ENCODE measurements at regions of chr1 and their contacts with region 1.

Region 1: GRCh38 chr1:92485381-92486257 is 1.1 kb downstream of the GFI1 start:
- DNase-seq: peak; percentile 95
- ATAC-seq: peak; percentile 57
- H3K4me3 Mint-ChIP-seq: peak overlapping the region; percentile 98
- H3K27ac Mint-ChIP-seq: peak overlapping the region; percentile 98
- H3K4me1 Mint-ChIP-seq: peaks cover 28% of the 10 kb centered on the region
- H3K27me3 Mint-ChIP-seq: no peaks in the 10 kb centered on the region
- CTCF ChIP-seq: peak; percentile 72

Region 2: GRCh38 chr1:92310185-92310597 is 175.4 kb before region 1 on chr1:
- CTCF ChIA-PET with region 1: interaction called, 21 read pairs
- POLR2A ChIA-PET with region 1: interaction called, 57 read pairs
- intact Hi-C with region 1: loop called (anchors 5 kb)
- DNase-seq: no peak
- ATAC-seq: peak; percentile 68
- H3K4me3 Mint-ChIP-seq: no peak overlapping the region
- H3K27ac Mint-ChIP-seq: no peak overlapping the region
- H3K4me1 Mint-ChIP-seq: peaks cover 38% of the 10 kb centered on the region
- H3K27me3 Mint-ChIP-seq: no peaks in the 10 kb centered on the region
- CTCF ChIP-seq: peak; percentile 74

Region 3: GRCh38 chr1:92461364-92462097 is 24.1 kb before region 1 on chr1:
- CTCF ChIA-PET with region 1: interaction called, 4 read pairs
- POLR2A ChIA-PET with region 1: interaction called, 10 read pairs
- intact Hi-C with region 1: no loop called
- DNase-seq: no peak
- ATAC-seq: no peak
- H3K4me3 Mint-ChIP-seq: no peak overlapping the region
- H3K27ac Mint-ChIP-seq: no peak overlapping the region
- H3K4me1 Mint-ChIP-seq: peaks cover 50% of the 10 kb centered on the region
- H3K27me3 Mint-ChIP-seq: no peaks in the 10 kb centered on the region
- CTCF ChIP-seq: peak; percentile 23

Region 4: GRCh38 chr1:92577261-92577895 is 91.8 kb after region 1 on chr1:
- CTCF ChIA-PET with region 1: interaction called, 7 read pairs
- POLR2A ChIA-PET with region 1: interaction called, 48 read pairs
- intact Hi-C with region 1: loop called (anchors 5 kb)
- DNase-seq: no peak
- ATAC-seq: peak; percentile 63
- H3K4me3 Mint-ChIP-seq: peak overlapping the region; percentile 84
- H3K27ac Mint-ChIP-seq: peak overlapping the region; percentile 91
- H3K4me1 Mint-ChIP-seq: peaks cover 65% of the 10 kb centered on the region
- H3K27me3 Mint-ChIP-seq: no peaks in the 10 kb centered on the region
- CTCF ChIP-seq: no peak

Region 5: DNA sequence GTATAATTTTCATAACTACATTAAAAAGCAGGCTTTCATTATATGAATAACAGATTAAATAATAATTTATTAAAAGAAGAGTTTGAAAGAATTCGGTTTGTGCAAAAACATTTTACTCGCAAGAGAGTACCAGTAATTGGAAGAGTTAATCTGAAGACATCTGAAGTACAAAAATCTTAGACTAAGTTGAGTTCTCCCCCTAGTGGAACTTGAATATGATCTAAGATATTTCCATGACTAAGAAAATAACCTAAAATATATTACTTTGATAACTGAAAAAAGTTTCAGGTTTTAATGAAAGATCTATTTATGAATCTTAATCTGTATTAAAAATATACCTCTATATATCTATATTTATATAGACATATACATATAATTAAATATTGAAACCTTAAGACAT is 113.6 kb after region 1 on chr1:
- CTCF ChIA-PET with region 1: interaction called, 20 read pairs
- POLR2A ChIA-PET with region 1: interaction called, 20 read pairs
- intact Hi-C with region 1: loop called (anchors 5 kb)
- DNase-seq: no peak
- ATAC-seq: peak; percentile 61
- H3K4me3 Mint-ChIP-seq: no peak overlapping the region
- H3K27ac Mint-ChIP-seq: no peak overlapping the region
- H3K4me1 Mint-ChIP-seq: peaks cover 40% of the 10 kb centered on the region
- H3K27me3 Mint-ChIP-seq: no peaks in the 10 kb centered on the region
- CTCF ChIP-seq: peak; percentile 74

Measured in activated CD8-positive, alpha-beta T cell treated with anti-CD3 and anti-CD28 coated beads for 36 hours (primary cell).